ENCODE measurements at regions of chr1 and their contacts with region 1.

Region 1: GRCh38 chr1:52424231-52424636 is 19.8 kb downstream of the PRPF38A start:
- DNase-seq: peak; percentile 65 to 86 (median 71)
- H3K4me3 ChIP-seq: peak overlapping the region in 1 of 2 donors; percentile 4
- H3K4me3 Mint-ChIP-seq: peak overlapping the region; percentile 66 to 83 (median 74)
- H3K27ac ChIP-seq: peak overlapping the region; percentile 53
- H3K27ac Mint-ChIP-seq: peak overlapping the region; percentile 91 to 99 (median 94)
- H3K4me1 ChIP-seq: peaks cover 57% of the 10 kb centered on the region
- H3K4me1 Mint-ChIP-seq: peaks cover 38 to 49% (median 46%) of the 10 kb centered on the region in 4 donors
- H3K27me3 ChIP-seq: no peaks in the 10 kb centered on the region
- H3K27me3 Mint-ChIP-seq: no peaks in the 10 kb centered on the region

Region 2: DNA sequence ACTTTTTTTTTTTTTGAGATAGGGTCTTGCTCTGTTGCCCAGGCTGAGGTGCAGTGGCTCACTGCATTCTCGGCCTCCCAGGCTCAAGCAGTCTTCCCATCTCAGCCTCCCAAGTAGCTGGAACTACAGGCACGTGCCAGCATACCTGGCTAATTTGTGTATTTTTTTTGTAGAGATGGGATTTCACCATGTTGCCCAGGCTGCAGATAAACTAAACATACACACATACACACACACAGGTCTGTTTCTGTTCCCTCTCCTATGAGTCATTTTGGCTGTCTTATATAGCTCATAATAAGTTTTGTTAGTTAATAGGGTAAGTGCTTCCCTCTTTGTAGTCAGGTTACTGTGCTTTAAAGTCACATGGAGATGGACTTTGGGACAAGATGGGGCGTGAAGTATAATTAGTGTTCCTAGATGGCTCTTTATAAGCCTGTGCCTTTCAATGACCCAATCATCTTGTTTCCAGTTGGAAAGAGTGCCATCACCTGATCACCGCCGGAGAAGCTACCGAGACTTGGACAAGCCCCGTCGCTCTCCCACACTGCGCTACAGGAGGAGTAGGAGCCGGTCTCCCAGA is 10.7 kb before region 1 on chr1:
- CTCF ChIA-PET with region 1: no interaction called
- POLR2A ChIA-PET with region 1: interaction called, 13 read pairs
- intact Hi-C with region 1: no loop called
- DNase-seq: no peak
- H3K4me3 ChIP-seq: no peak overlapping the region
- H3K4me3 Mint-ChIP-seq: no peak overlapping the region
- H3K27ac ChIP-seq: no peak overlapping the region
- H3K27ac Mint-ChIP-seq: peak overlapping the region in 1 of 7 donors; percentile 17
- H3K4me1 ChIP-seq: no peaks in the 10 kb centered on the region
- H3K4me1 Mint-ChIP-seq: peaks cover 6 to 22% (median 12%) of the 10 kb centered on the region in 4 donors
- H3K27me3 ChIP-seq: no peaks in the 10 kb centered on the region
- H3K27me3 Mint-ChIP-seq: no peaks in the 10 kb centered on the region

Region 3: DNA sequence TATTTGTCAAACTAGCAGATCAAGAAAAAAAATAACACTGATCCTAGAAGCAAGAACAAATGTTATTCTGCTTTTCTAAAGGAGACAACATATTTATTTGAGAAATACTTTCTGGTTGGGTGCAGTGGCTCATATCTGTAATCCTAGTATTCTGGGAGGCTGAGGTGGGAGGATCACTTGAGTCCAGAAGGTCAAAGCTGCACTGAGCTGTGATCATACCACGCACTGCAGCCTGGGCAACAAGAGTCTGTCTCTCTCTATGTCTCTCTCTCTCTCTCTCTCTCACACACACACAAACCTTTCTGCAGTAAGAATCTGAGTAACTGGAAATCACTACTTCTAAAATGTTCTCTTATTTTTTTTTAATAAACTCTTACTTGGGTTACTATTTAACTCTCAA is 11.4 kb after region 1 on chr1:
- CTCF ChIA-PET with region 1: interaction called, 4 read pairs
- POLR2A ChIA-PET with region 1: interaction called, 14 read pairs
- intact Hi-C with region 1: no loop called
- DNase-seq: no peak
- H3K4me3 ChIP-seq: no peak overlapping the region
- H3K4me3 Mint-ChIP-seq: no peak overlapping the region
- H3K27ac ChIP-seq: no peak overlapping the region
- H3K27ac Mint-ChIP-seq: peak overlapping the region in 4 of 7 donors; percentile 10 to 69 (median 49)
- H3K4me1 ChIP-seq: no peaks in the 10 kb centered on the region
- H3K4me1 Mint-ChIP-seq: peaks cover 0 to 1% (median 0%) of the 10 kb centered on the region in 4 donors
- H3K27me3 ChIP-seq: no peaks in the 10 kb centered on the region
- H3K27me3 Mint-ChIP-seq: no peaks in the 10 kb centered on the region

Region 4: GRCh38 chr1:52552505-52553361 is 128.5 kb after region 1 on chr1 and contains the start of gene TUT4:
- CTCF ChIA-PET with region 1: interaction called, 5 read pairs
- POLR2A ChIA-PET with region 1: interaction called, 13 read pairs
- intact Hi-C with region 1: loop called (anchors 1 kb)
- DNase-seq: peak; percentile 67 to 83 (median 73)
- H3K4me3 ChIP-seq: peak within 1 kb of the TSS; percentile 68 to 95
- H3K4me3 Mint-ChIP-seq: peak within 1 kb of the TSS in 7 of 8 donors; percentile 48 to 87 (median 77)
- H3K27ac ChIP-seq: peak within 1 kb of the TSS; percentile 92
- H3K27ac Mint-ChIP-seq: peak within 1 kb of the TSS; percentile 57 to 91 (median 83)
- H3K4me1 ChIP-seq: peaks cover 41% of the 10 kb centered on the region
- H3K4me1 Mint-ChIP-seq: peaks cover 25 to 41% (median 33%) of the 10 kb centered on the region in 4 donors
- H3K27me3 ChIP-seq: no peaks in the 10 kb centered on the region
- H3K27me3 Mint-ChIP-seq: no peaks in the 10 kb centered on the region
- total RNA-seq, gene TUT4: 151 to 159 TPM

Region 5: DNA sequence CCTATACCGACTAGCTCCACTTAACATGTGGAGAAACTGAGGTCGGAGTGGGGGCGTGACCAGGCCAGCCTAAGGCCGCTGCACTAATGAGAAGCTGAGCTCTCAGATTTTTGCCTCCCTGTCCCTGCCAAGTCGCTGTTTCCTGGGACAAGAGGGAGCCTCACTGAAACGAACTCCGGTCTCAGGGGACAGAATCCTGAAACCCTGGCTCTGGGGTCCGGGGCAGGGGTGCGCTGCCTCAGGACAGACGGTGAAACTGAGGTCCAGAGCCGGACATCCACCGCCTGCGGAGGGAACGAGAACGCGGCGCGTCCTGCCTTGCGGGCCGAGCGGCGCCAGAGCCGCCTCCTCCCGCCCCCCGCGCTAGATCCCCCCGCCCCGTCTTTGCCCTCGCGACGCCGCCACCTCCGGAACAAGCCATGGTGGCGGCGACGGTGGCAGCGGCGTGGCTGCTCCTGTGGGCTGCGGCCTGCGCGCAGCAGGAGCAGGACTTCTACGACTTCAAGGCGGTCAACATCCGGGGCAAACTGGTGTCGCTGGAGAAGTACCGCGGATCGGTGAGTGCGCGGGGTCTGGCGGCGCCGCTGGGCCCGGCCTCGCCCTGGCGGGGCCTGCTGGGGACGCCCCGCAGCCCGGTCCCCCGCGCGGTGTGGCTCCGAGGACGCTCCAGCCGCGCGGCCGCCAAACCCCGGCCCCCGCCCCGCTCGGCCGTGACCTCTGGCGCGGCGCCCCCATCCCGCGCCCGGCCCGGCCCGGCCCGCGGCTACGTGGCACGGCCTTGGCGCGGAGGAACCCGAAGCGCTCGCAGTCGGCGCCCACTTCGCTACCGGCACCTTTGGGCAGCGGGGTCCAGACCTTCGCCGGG is 178.0 kb after region 1 on chr1 and contains the start of gene GPX7:
- CTCF ChIA-PET with region 1: interaction called, 3 read pairs
- POLR2A ChIA-PET with region 1: interaction called, 4 read pairs
- intact Hi-C with region 1: loop called (anchors 1 kb)
- DNase-seq: peak; percentile 61 to 68 (median 65)
- H3K4me3 ChIP-seq: peak within 1 kb of the TSS; percentile 60 to 64
- H3K4me3 Mint-ChIP-seq: peak within 1 kb of the TSS; percentile 89 to 94 (median 92)
- H3K27ac ChIP-seq: peak within 1 kb of the TSS; percentile 69
- H3K27ac Mint-ChIP-seq: peak within 1 kb of the TSS; percentile 89 to 97 (median 94)
- H3K4me1 ChIP-seq: peaks cover 39% of the 10 kb centered on the region
- H3K4me1 Mint-ChIP-seq: peaks cover 38 to 57% (median 47%) of the 10 kb centered on the region in 4 donors
- H3K27me3 ChIP-seq: no peaks in the 10 kb centered on the region
- H3K27me3 Mint-ChIP-seq: no peaks in the 10 kb centered on the region
- total RNA-seq, gene GPX7: 26.3 to 27.5 TPM

Measured in CD4-positive, alpha-beta memory T cell (primary cell).